Panc1 (cell line): ENCODE measurements at regions of chr6 and their contacts with region 1.

Region 1: DNA sequence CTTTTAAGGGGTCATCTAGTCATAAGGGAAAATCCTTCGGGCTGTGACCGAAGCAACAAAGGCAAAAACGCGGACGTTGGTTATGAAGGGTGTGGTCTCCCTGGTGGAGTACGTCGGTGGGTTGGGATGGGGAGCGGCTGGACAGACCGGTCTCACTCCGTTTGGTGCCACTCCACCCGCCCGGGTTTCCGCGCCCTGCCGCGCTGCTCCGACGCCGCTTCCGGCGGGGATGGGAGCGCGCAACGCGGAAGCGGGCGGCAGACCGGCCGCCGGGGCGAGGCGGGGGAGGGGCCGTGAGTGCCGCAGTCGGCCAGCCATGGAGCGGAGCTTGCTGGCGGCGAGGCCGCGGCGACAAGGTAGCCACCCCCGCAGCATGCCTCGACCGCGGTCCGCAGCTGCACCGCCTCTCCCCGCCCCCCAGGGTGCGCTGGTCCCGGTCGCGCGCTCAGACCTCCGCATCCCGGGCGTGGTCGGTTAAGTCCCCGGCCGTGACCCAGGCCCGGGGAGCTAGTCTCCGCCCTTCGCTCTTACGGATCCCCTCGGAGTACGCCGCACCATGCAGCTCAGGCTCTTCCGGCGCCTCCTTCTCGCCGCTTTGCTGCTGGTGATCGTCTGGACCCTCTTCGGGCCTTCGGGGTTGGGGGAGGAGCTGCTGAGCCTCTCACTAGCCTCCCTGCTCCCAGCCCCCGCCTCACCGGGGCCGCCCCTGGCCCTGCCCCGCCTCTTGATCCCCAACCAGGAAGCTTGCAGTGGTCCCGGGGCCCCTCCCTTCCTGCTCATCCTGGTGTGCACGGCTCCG is at the start of gene B3GALT4:
- DNase-seq: no peak
- ATAC-seq: peak; percentile 76
- H3K4me3 ChIP-seq: peak within 1 kb of the TSS; percentile 97
- H3K27ac ChIP-seq: peak within 1 kb of the TSS; percentile 100
- H3K4me1 ChIP-seq: peaks cover 53% of the 10 kb centered on the region
- H3K27me3 ChIP-seq: no peaks in the 10 kb centered on the region
- CTCF ChIP-seq: no peak; the same call in 1 of the 2 replicates
- total RNA-seq, gene B3GALT4: 6.0 TPM

Region 2: GRCh38 chr6:33288921-33289748 is 12.1 kb after region 1 on chr6 and contains the starts of genes PFDN6 and WDR46:
- CTCF ChIA-PET with region 1: interaction called, 5 read pairs
- POLR2A ChIA-PET with region 1: interaction called, 11 read pairs
- in situ Hi-C with region 1: no loop called
- intact Hi-C with region 1: no loop called
- DNase-seq: peak; percentile 93
- ATAC-seq: peak; percentile 97
- H3K4me3 ChIP-seq: peak within 1 kb of the TSS; percentile 91 to 97
- H3K27ac ChIP-seq: peak within 1 kb of the TSS; percentile 95
- H3K4me1 ChIP-seq: peaks cover 19% of the 10 kb centered on the region
- H3K27me3 ChIP-seq: no peaks in the 10 kb centered on the region
- CTCF ChIP-seq: no peak
- total RNA-seq, gene PFDN6: 101 TPM
- total RNA-seq, gene WDR46: 80.6 TPM

Region 3: GRCh38 chr6:33391278-33391921 is 114.3 kb after region 1 on chr6 and contains the start of gene KIFC1:
- CTCF ChIA-PET with region 1: no interaction called
- POLR2A ChIA-PET with region 1: no interaction called
- in situ Hi-C with region 1: no loop called
- intact Hi-C with region 1: no loop called
- DNase-seq: peak; percentile 98
- ATAC-seq: peak; percentile 97
- H3K4me3 ChIP-seq: peak within 1 kb of the TSS; percentile 88 to 89
- H3K27ac ChIP-seq: peak within 1 kb of the TSS; percentile 98
- H3K4me1 ChIP-seq: peaks cover 27% of the 10 kb centered on the region
- H3K27me3 ChIP-seq: no peaks in the 10 kb centered on the region
- CTCF ChIP-seq: peak; percentile 99
- total RNA-seq, gene KIFC1: 81.8 TPM